ENCODE measurements at regions of chr3 and their contacts with region 1.

Region 1: DNA sequence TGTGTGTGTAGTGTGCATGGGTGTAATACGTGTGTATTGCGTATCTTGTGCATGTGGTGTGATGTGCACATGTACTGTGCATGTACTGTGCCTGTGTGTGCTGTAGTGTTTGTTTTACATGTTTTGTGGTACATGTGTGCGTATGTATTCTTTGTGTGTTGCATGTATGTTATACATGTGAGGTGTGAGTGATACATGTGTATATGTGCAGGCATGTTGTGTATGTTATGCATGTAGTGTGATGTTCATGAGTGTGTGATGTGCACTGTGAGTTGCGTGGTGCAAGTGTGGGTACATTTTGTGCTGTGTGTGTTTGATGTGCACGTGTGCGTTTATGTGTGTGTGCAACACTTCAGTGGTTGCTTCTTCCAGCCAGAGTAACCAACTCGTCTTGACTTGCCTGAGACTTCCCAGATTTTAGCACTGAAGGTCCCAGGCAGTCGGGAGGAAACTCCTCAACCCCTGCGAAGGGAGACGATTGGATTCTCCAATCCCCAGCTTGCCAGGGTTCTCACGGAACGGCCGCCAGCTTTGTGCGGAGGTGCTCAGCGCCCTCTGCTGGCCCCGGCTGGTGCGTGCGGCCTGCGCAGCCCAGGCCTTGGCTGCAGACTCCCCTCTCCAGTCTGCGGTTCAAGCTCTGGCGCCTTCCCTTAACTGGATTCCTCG is 3.6 kb downstream of the GALNT15 start:
- DNase-seq: peak; percentile 81
- CTCF ChIP-seq: peak; percentile 96

Region 2: GRCh38 chr3:16190704-16191103 is 12.6 kb after region 1 on chr3:
- CTCF ChIA-PET with region 1: interaction called, 10 read pairs
- POLR2A ChIA-PET with region 1: interaction called, 4 read pairs
- DNase-seq: no peak
- CTCF ChIP-seq: no peak